Aorta (tissue), 5 donors: ENCODE measurements at regions of chr7 and their contacts with region 1.

Region 1: GRCh38 chr7:127819975-127820731 is 168.2 kb downstream of the SND1 start:
- DNase-seq: no peak
- ATAC-seq: no peak
- H3K4me3 ChIP-seq: no peak overlapping the region
- H3K27ac ChIP-seq: no peak overlapping the region
- H3K4me1 ChIP-seq: peaks cover 0 to 3% of the 10 kb centered on the region in 2 donors
- H3K27me3 ChIP-seq: no peaks in the 10 kb centered on the region

Region 2: DNA sequence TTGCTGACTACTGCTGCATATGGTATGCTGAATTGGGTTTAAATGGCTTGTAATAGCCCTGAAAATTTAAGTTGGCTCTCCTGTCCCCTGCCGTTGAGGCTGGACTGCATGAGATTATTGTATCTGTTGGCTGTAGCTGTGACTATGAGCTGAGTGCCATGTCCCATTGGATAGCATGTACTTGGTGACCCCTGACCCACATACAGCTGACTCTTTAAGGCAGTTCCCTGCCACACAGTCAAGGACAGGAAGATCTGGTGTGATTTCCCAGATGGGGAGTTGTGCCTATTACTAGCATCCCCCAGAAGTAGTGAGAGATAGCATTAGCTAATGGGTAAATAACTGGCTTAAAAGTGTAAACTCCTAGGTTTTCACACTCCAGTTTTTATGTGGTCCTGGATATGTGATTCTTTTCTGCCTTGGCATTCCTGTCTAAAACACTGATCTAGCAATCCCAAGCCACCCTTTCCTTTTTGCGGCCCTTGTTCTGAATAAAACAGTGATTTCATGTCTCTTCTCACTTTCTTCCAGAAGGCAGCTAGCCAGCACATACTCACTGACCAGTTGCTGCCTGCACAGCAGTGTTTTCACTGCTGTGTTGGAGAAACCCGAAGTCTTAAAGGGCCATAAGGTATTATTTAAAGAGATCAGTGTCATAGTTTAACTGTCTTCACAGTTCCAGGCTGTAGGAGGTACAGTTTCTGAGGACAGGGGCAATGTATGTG is 175.2 kb after region 1 on chr7:
- intact Hi-C with region 1: loop called in 1 of 2 experiments (anchors 10 kb)
- DNase-seq: no peak
- ATAC-seq: peak; percentile 59
- H3K4me3 ChIP-seq: no peak overlapping the region
- H3K27ac ChIP-seq: no peak overlapping the region
- H3K4me1 ChIP-seq: peaks cover 0 to 7% of the 10 kb centered on the region in 2 donors
- H3K27me3 ChIP-seq: no peaks in the 10 kb centered on the region

Region 3: GRCh38 chr7:128010394-128011127 is 190.4 kb after region 1 on chr7:
- intact Hi-C with region 1: no loop called
- DNase-seq: no peak
- ATAC-seq: no peak
- H3K4me3 ChIP-seq: no peak overlapping the region
- H3K27ac ChIP-seq: no peak overlapping the region
- H3K4me1 ChIP-seq: no peaks in the 10 kb centered on the region
- H3K27me3 ChIP-seq: no peaks in the 10 kb centered on the region